PC-3 (cell line): ENCODE measurements at regions of chr11 and their contacts with region 1.

Region 1: DNA sequence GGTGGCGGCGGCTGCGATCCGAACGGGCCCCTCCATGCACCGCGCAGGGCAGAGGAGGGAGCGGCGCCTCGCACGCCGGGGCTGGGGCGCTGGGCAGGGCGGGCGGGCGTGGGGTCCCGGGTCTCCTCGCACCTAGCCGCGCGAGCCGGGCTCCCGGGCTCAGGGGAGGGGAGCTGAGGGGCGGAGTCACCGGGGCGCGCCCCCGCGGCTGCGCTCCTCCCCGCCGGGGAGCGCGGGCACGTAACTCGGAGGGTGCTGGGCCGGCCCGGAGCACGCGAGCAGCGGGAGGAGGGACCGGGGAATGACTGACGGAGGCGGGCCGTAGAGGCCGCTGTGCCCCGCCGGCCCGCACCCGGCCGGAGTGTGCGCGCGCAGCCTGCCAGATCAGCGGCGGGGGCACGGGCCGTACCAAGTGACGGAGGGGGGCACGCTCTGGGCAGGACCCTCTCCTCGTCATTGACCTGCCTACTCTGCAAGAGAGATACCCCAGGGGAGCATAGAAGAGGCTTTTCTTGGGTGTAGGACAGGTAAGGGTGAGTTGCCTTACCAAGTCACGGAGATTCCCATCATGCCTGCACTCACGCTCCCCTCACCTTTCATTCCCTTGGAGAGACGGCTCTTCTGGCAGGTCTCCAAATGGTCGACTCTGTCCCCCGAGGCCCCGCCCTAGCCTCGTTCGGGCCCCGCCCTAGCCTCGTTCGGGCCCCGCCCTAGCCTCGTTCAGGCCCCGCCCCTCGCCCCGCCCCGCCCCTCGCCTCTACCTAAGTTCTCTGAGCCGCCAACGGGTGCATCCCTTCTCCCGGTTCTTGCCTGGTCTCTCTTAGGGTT is at the start of gene CDON:
- DNase-seq: peak; percentile 97
- ATAC-seq: peak; percentile 93
- H3K4me3 ChIP-seq: peak within 1 kb of the TSS; percentile 75
- H3K27ac ChIP-seq: peak within 1 kb of the TSS; percentile 64
- H3K4me1 ChIP-seq: peaks cover 22% of the 10 kb centered on the region
- H3K27me3 ChIP-seq: no peaks in the 10 kb centered on the region
- CTCF ChIP-seq: no peak
- total RNA-seq, gene CDON: 4.4 and 10.1 TPM in 2 replicates

Region 2: GRCh38 chr11:125245299-125245698 is 817.6 kb before region 1 on chr11:
- CTCF ChIA-PET with region 1: no interaction called
- POLR2A ChIA-PET with region 1: no interaction called
- intact Hi-C with region 1: no loop called
- DNase-seq: no peak
- ATAC-seq: no peak
- H3K4me3 ChIP-seq: no peak overlapping the region
- H3K27ac ChIP-seq: no peak overlapping the region
- H3K4me1 ChIP-seq: no peaks in the 10 kb centered on the region
- H3K27me3 ChIP-seq: peaks cover 67% of the 10 kb centered on the region
- CTCF ChIP-seq: no peak

Region 3: GRCh38 chr11:125923012-125923579 is 139.8 kb before region 1 on chr11:
- CTCF ChIA-PET with region 1: interaction called, 5 read pairs
- POLR2A ChIA-PET with region 1: no interaction called
- intact Hi-C with region 1: loop called (anchors 1 kb)
- DNase-seq: peak; percentile 94
- ATAC-seq: peak; percentile 86
- H3K4me3 ChIP-seq: no peak overlapping the region
- H3K27ac ChIP-seq: no peak overlapping the region
- H3K4me1 ChIP-seq: no peaks in the 10 kb centered on the region
- H3K27me3 ChIP-seq: peaks cover 6% of the 10 kb centered on the region; the same call in 1 of the 2 replicates
- CTCF ChIP-seq: peak; percentile 93

Region 4: GRCh38 chr11:126007238-126007637 is 55.7 kb before region 1 on chr11:
- CTCF ChIA-PET with region 1: no interaction called
- POLR2A ChIA-PET with region 1: no interaction called
- intact Hi-C with region 1: loop called (anchors 2 kb)
- DNase-seq: peak; percentile 67
- ATAC-seq: peak; percentile 99
- H3K4me3 ChIP-seq: no peak overlapping the region
- H3K27ac ChIP-seq: no peak overlapping the region
- H3K4me1 ChIP-seq: peaks cover 11% of the 10 kb centered on the region
- H3K27me3 ChIP-seq: no peaks in the 10 kb centered on the region
- CTCF ChIP-seq: no peak

Region 5: GRCh38 chr11:126090452-126090851 is 27.6 kb after region 1 on chr11:
- CTCF ChIA-PET with region 1: interaction called, 4 read pairs
- POLR2A ChIA-PET with region 1: no interaction called
- intact Hi-C with region 1: loop called (anchors 1 kb)
- DNase-seq: no peak
- ATAC-seq: no peak
- H3K4me3 ChIP-seq: no peak overlapping the region
- H3K27ac ChIP-seq: no peak overlapping the region
- H3K4me1 ChIP-seq: peaks cover 11% of the 10 kb centered on the region
- H3K27me3 ChIP-seq: no peaks in the 10 kb centered on the region
- CTCF ChIP-seq: no peak

Region 6: GRCh38 chr11:126132319-126132718 is 69.4 kb after region 1 on chr11:
- CTCF ChIA-PET with region 1: interaction called, 7 read pairs
- POLR2A ChIA-PET with region 1: no interaction called
- intact Hi-C with region 1: loop called (anchors 5 kb)
- DNase-seq: peak; percentile 84
- ATAC-seq: peak; percentile 98
- H3K4me3 ChIP-seq: no peak overlapping the region
- H3K27ac ChIP-seq: no peak overlapping the region
- H3K4me1 ChIP-seq: peaks cover 11% of the 10 kb centered on the region
- H3K27me3 ChIP-seq: peaks cover 3% of the 10 kb centered on the region; the same call in 1 of the 2 replicates
- CTCF ChIP-seq: no peak